Caco-2 (cell line): ENCODE measurements at regions of chr15 and their contacts with region 1.

Region 1: DNA sequence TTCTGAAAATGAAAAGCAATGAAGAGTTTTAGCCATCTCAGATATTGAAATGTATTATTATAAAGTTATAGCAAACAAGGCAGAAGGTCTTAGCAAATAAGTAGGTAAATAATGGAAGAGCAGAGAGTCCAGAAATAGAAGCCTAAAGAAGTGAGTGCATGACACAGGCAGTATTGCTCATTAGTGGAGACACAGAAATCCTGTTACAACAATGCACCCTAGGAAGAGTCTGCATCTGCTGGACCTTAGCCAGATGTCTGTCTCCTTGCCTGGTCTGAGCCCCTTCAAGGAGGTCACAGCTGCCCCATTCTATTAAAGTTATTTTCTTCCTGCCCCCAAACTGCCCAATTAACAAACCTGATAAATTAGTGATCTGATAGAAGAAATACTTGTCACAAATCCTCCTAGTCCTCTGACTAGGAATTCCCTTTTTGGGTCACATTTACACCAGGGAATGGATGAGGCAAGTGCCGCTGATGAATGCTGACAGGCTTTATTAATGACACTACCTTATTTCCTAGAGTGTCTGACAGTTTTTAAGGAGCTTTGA is 51.9 kb downstream of the HOMER2 start:
- DNase-seq: no peak
- H3K4me3 ChIP-seq: no peak overlapping the region
- H3K4me3 Mint-ChIP-seq: no peak overlapping the region
- H3K27ac Mint-ChIP-seq: no peak overlapping the region
- H3K4me1 ChIP-seq: no peaks in the 10 kb centered on the region
- H3K4me1 Mint-ChIP-seq: no peaks in the 10 kb centered on the region
- H3K27me3 ChIP-seq: no peaks in the 10 kb centered on the region
- H3K27me3 Mint-ChIP-seq: peaks cover 3% of the 10 kb centered on the region
- CTCF ChIP-seq: no peak

Region 2: GRCh38 chr15:83199288-83199687 is 298.7 kb after region 1 on chr15:
- CTCF ChIA-PET with region 1: no interaction called
- POLR2A ChIA-PET with region 1: no interaction called
- intact Hi-C with region 1: loop called (anchors 5 kb)
- DNase-seq: no peak
- H3K4me3 ChIP-seq: no peak overlapping the region
- H3K4me3 Mint-ChIP-seq: no peak overlapping the region
- H3K27ac Mint-ChIP-seq: no peak overlapping the region
- H3K4me1 ChIP-seq: no peaks in the 10 kb centered on the region
- H3K4me1 Mint-ChIP-seq: no peaks in the 10 kb centered on the region
- H3K27me3 ChIP-seq: no peaks in the 10 kb centered on the region
- H3K27me3 Mint-ChIP-seq: no peaks in the 10 kb centered on the region
- CTCF ChIP-seq: no peak